Endothelial cell of umbilical vein (primary cell): ENCODE measurements at regions of chr10 and their contacts with region 1.

Region 1: DNA sequence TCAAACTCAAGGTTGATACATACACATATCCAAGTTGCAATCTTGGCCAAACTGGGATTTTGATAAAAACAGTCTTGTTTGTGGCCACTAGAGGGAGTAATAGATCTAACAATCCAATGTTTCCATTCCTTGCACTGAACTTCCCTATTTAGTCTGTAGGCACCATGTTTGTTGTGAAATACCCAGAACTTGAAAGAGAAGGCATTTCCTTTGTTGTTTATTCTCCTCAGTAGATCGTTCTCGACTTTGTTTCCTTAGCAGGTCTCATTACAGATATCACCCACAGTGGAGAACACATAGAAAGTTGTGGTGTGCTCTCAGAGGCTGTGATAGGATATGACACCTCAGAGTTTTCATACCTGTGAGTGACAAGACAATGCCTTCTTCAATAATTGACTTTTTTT is 70.3 kb upstream of the MXI1 start:
- DNase-seq: peak; percentile 74
- H3K4me3 ChIP-seq: no peak overlapping the region
- H3K27ac ChIP-seq: no peak overlapping the region
- H3K4me1 ChIP-seq: peaks cover 14% of the 10 kb centered on the region
- H3K27me3 ChIP-seq: no peaks in the 10 kb centered on the region
- CTCF ChIP-seq: peak; percentile 49 to 53
- POLR2A ChIP-seq: no peak

Region 2: GRCh38 chr10:109956454-109957091 is 180.6 kb before region 1 on chr10:
- CTCF ChIA-PET with region 1: no interaction called
- POLR2A ChIA-PET with region 1: no interaction called
- dilution Hi-C with region 1: no loop called
- intact Hi-C with region 1: loop called (anchors 1 kb)
- DNase-seq: peak; percentile 41
- H3K4me3 ChIP-seq: no peak overlapping the region
- H3K27ac ChIP-seq: no peak overlapping the region
- H3K4me1 ChIP-seq: no peaks in the 10 kb centered on the region
- H3K27me3 ChIP-seq: peaks cover 0 to 2% of the 10 kb centered on the region in 2 experiments
- CTCF ChIP-seq: peak; percentile 55 to 70
- POLR2A ChIP-seq: no peak

Region 3: GRCh38 chr10:110059925-110060324 is 77.2 kb before region 1 on chr10:
- CTCF ChIA-PET with region 1: no interaction called
- POLR2A ChIA-PET with region 1: no interaction called
- dilution Hi-C with region 1: no loop called
- intact Hi-C with region 1: no loop called
- DNase-seq: peak; percentile 47
- H3K4me3 ChIP-seq: no peak overlapping the region
- H3K27ac ChIP-seq: no peak overlapping the region
- H3K4me1 ChIP-seq: peaks cover 14% of the 10 kb centered on the region
- H3K27me3 ChIP-seq: no peaks in the 10 kb centered on the region
- CTCF ChIP-seq: no peak
- POLR2A ChIP-seq: no peak

Region 4: GRCh38 chr10:110081911-110082310 is 55.2 kb before region 1 on chr10:
- CTCF ChIA-PET with region 1: interaction called, 5 read pairs
- POLR2A ChIA-PET with region 1: no interaction called
- dilution Hi-C with region 1: no loop called
- intact Hi-C with region 1: loop called (anchors 2 kb)
- DNase-seq: peak; percentile 97
- H3K4me3 ChIP-seq: no peak overlapping the region
- H3K27ac ChIP-seq: peak overlapping the region; percentile 90
- H3K4me1 ChIP-seq: peaks cover 41% of the 10 kb centered on the region
- H3K27me3 ChIP-seq: no peaks in the 10 kb centered on the region
- CTCF ChIP-seq: no peak
- POLR2A ChIP-seq: peak; percentile 70

Region 5: GRCh38 chr10:110225756-110226542 is 88.8 kb after region 1 on chr10:
- CTCF ChIA-PET with region 1: interaction called, 15 read pairs
- POLR2A ChIA-PET with region 1: no interaction called
- dilution Hi-C with region 1: no loop called
- intact Hi-C with region 1: loop called (anchors 1 kb)
- DNase-seq: peak; percentile 89
- H3K4me3 ChIP-seq: peak overlapping the region; percentile 74 to 92 (median 75)
- H3K27ac ChIP-seq: no peak overlapping the region
- H3K4me1 ChIP-seq: peaks cover 8% of the 10 kb centered on the region
- H3K27me3 ChIP-seq: no peaks in the 10 kb centered on the region
- CTCF ChIP-seq: peak; percentile 54 to 79
- POLR2A ChIP-seq: no peak

Region 6: DNA sequence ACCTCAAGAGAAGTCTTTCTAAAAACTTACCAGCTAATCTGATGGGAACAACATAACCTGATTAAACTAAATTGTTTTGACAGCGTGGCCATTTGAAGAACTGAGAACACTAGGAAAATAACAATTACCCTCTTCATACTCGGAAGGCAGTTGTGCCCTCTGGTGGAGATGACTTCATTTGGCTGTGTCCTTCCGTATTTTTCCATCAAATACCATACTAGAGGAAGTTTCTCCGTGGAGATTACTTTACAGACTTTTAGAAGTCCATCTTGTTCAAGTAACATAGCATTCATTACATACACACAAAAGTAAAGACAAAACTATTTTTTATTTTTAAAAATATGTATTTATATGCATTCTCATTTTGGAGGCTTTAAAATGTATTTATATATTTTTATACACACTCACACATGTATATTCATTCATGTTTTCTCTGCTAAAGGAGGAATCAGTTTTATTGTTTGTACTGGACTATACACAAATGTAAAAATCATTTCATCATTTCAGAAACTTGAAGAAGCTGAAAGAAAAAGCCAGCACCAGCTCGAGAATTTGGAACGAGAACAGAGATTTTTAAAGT is 142.4 kb after region 1 on chr10:
- CTCF ChIA-PET with region 1: interaction called, 72 read pairs
- POLR2A ChIA-PET with region 1: interaction called, 6 read pairs
- dilution Hi-C with region 1: loop called (anchors 25 kb)
- intact Hi-C with region 1: loop called (anchors 1 kb)
- DNase-seq: peak; percentile 76
- H3K4me3 ChIP-seq: peak overlapping the region in 1 of 3 experiments; percentile 41
- H3K27ac ChIP-seq: no peak overlapping the region
- H3K4me1 ChIP-seq: peaks cover 5% of the 10 kb centered on the region
- H3K27me3 ChIP-seq: peaks cover 0 to 2% of the 10 kb centered on the region in 2 experiments
- CTCF ChIP-seq: peak; percentile 61 to 66
- POLR2A ChIP-seq: no peak